Activated CD4-positive, alpha-beta T cell treated with anti-CD3 and anti-CD28 coated beads for 36 hours (primary cell): ENCODE measurements at regions of chr19 and their contacts with region 1.

Region 1: DNA sequence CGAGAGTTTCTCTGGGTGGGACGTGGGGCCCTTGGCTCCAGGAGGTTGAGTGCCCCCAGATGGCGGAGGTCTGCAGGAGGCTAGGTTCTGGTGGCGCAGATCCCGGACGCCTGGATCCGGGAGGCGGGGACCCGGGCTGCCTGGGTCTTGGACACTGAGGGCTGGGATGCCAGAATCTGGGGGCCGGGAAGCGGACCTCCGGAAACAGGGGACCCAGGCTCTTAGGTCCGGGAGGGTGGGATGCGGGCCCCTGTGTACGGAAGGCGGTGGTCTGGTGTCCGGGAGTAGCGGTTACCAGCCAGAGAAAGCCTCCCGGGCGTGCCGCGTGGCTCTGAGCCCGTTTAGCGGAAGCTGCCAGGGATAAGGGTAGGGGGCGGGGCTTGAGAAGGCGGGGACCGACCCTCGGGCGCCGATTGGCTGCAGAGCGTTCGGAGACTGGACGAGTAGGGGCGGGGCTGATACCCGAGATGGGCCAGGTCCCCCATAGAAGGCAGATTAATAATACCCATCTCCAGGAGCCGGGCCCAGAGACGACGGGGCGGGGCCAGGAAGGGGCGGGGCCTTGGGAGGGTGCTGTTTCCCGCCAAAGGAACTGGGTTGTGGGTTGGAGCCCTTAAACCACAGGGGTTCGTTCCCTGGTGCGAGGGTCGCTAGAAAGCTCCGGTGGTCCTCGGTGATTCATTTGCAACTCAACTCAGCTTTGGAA is at the start of gene SLC1A5:
- DNase-seq: peak; percentile 99
- ATAC-seq: peak; percentile 81
- H3K4me3 Mint-ChIP-seq: peak within 1 kb of the TSS; percentile 94
- H3K27ac Mint-ChIP-seq: peak within 1 kb of the TSS; percentile 94
- H3K4me1 Mint-ChIP-seq: peaks cover 38% of the 10 kb centered on the region
- H3K27me3 Mint-ChIP-seq: no peaks in the 10 kb centered on the region
- total RNA-seq, gene SLC1A5: 200 to 227 TPM

Region 2: DNA sequence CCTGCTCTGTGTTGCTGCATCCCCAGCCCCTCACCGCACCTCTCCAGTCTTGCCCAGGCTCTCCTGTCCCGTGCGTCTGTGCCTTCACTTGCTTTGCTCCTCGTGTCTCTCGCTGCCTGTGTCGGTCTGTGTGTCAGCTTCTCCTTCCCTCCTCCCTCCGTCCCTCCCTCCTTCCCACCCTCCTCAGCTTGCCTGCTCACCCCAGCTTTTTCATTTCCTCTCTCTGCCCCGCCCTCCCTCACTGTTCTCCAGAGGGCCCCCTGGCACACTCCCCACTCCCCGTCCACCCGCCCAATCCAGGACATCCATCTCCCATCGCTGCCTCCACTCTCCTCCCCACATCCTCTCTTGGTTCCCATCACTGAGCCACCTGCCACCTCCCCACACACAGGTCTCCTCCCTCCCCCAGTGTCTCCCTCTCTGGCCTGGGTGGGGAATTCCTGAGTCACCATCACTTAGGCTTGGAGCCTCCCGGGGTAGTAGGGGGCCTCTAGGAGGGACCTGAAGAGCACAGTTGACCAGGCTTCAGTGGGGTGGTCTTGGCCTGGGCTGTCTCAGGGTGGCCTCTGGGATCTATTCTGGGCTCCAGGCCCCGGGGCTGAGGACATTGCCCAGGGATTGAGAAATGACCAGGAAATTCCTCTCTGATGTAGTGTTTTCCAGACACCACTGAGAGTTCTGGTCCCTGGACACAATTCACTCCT is 163.3 kb before region 1 on chr19 and contains the start of gene PTGIR:
- CTCF ChIA-PET with region 1: no interaction called
- POLR2A ChIA-PET with region 1: no interaction called
- intact Hi-C with region 1: loop called in 1 of 2 experiments (anchors 5 kb)
- DNase-seq: peak; percentile 75
- ATAC-seq: peak; percentile 80
- H3K4me3 Mint-ChIP-seq: peak within 1 kb of the TSS; percentile 82
- H3K27ac Mint-ChIP-seq: peak within 1 kb of the TSS; percentile 92
- H3K4me1 Mint-ChIP-seq: peaks cover 45% of the 10 kb centered on the region
- H3K27me3 Mint-ChIP-seq: no peaks in the 10 kb centered on the region
- total RNA-seq, gene PTGIR: 40.1 to 41.0 TPM

Region 3: GRCh38 chr19:46746281-46747013 is 42.0 kb before region 1 on chr19 and contains the start of gene STRN4:
- CTCF ChIA-PET with region 1: no interaction called
- POLR2A ChIA-PET with region 1: no interaction called
- intact Hi-C with region 1: loop called in 1 of 2 experiments (anchors 2 kb)
- DNase-seq: peak; percentile 73
- ATAC-seq: peak; percentile 68
- H3K4me3 Mint-ChIP-seq: peak within 1 kb of the TSS; percentile 89
- H3K27ac Mint-ChIP-seq: peak within 1 kb of the TSS; percentile 89
- H3K4me1 Mint-ChIP-seq: peaks cover 49% of the 10 kb centered on the region
- H3K27me3 Mint-ChIP-seq: no peaks in the 10 kb centered on the region
- total RNA-seq, gene STRN4: 56.4 to 56.8 TPM

Region 4: GRCh38 chr19:46850228-46851203 is 62.1 kb after region 1 on chr19 and contains the start of gene AP2S1:
- CTCF ChIA-PET with region 1: interaction called, 4 read pairs
- POLR2A ChIA-PET with region 1: no interaction called
- intact Hi-C with region 1: loop called in 1 of 2 experiments (anchors 1 kb)
- DNase-seq: peak; percentile 95
- ATAC-seq: peak; percentile 97
- H3K4me3 Mint-ChIP-seq: peak within 1 kb of the TSS; percentile 92
- H3K27ac Mint-ChIP-seq: peak within 1 kb of the TSS; percentile 64
- H3K4me1 Mint-ChIP-seq: peaks cover 21% of the 10 kb centered on the region
- H3K27me3 Mint-ChIP-seq: no peaks in the 10 kb centered on the region
- total RNA-seq, gene AP2S1: 102 to 104 TPM

Region 5: DNA sequence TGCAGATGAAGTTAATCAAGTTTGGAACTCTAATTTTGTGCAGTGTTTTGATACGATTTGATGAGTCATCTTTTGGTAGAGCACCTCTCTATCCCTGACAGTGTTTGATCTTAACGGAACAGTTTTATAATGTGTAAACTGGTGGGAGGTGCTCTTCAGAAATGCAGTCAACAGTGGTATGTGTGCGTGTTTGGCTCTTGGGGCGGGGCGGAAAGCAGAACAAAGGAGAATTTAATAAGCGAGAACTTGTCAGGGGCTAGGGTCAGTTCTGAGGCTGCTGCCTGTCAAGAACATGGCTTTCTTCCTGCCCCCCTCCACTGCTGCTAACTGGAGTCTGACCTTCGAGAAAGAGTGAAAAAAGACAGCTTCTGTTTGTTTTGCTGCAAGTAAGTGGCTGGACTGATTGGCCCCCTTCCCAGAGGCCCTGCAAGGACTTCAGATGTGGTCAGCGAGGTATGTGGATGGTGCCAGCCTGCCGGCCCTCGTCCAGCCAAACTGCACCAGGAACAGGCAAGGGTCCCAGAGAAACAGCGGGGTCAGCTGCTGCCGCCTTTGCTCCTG is 401.8 kb after region 1 on chr19:
- CTCF ChIA-PET with region 1: no interaction called
- POLR2A ChIA-PET with region 1: no interaction called
- intact Hi-C with region 1: loop called in 1 of 2 experiments (anchors 2 kb)
- DNase-seq: peak; percentile 84
- ATAC-seq: peak; percentile 57
- H3K4me3 Mint-ChIP-seq: peak overlapping the region; percentile 48
- H3K27ac Mint-ChIP-seq: peak overlapping the region; percentile 84
- H3K4me1 Mint-ChIP-seq: peaks cover 71% of the 10 kb centered on the region
- H3K27me3 Mint-ChIP-seq: no peaks in the 10 kb centered on the region

Region 6: DNA sequence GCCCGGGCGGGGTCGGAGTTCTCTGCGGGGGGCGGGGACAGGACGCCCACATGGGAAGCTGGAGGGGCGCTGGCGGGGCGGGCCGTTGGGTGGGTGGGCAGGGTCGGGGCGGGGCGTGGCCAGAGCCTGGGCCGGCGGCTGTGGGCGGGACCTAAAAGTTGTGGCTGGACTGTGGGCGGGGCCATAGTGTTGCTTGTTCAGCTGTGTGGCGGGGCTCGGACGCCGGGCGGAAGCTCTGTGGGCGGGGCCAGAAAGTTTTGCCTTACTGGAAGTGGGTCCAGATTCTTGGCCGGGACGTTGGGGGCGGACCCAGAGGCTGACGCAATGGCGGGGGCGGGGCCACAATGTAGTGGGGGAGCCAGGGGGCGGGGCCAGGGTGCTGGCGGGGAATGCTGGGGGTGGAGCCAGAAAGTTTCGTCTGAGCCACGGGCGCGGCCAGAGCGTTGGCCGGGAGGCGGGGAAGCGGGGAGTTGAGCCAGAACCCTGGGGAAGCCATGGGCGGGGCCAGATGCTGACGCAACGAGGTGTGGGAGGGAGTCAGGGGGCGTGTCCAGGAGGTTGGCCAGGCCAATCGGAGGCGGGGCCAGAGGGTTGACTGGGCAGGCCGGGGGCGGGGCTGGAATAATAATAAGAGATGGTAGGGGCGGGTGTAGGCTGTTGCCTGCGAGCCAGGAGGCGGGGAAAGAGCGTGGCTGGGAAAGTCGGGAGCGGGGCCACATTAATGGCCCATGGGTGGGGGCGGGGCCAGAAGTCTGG is 468.5 kb after region 1 on chr19:
- CTCF ChIA-PET with region 1: no interaction called
- POLR2A ChIA-PET with region 1: no interaction called
- intact Hi-C with region 1: loop called in 1 of 2 experiments (anchors 1 kb)
- DNase-seq: peak; percentile 100
- ATAC-seq: peak; percentile 86
- H3K4me3 Mint-ChIP-seq: peak overlapping the region; percentile 90
- H3K27ac Mint-ChIP-seq: peak overlapping the region; percentile 93
- H3K4me1 Mint-ChIP-seq: peaks cover 31% of the 10 kb centered on the region
- H3K27me3 Mint-ChIP-seq: no peaks in the 10 kb centered on the region